Testis (tissue), 5 donors: ENCODE measurements at regions of chr9 and their contacts with region 1.

Region 1: DNA sequence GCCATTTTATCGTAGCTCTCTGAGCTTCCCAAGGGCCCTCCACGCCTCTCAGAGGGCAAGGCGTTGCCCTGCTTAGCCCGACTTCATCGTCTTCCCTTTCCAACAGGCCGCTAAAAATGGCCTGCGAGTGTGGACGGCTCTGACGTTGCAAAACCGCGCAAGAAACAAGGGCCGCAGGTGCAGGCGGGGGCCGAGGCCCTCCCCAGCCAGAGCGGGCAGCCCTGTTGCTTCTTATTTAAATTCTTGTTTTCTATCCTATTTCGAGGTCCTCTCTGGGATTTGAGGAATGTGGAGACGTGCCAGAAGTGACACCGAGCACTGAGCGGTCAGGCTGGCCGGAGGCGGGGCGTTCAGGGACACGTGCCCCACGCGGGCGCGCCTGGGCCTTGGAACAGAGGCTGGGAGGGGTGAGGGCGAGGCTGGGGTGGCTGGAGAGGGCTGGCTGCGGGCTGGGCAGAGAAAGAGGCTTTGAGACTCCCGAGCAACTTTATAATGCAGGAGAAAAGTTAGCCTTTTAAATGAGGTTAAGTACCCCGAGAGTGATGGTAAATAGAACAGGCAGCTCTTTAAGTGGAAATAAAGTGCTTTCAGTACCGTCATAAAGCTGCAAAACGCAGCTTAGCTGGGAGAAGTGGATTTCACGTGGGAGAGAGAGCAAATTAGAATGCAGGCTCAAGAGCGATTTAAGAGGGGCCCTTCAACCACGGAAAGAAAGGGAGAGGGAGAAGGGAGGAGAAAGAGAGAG is 243.6 kb downstream of the AUH start:
- DNase-seq: peak; percentile 89
- H3K4me3 ChIP-seq: peak overlapping the region; percentile 19 to 40
- H3K27ac ChIP-seq: peak overlapping the region; percentile 41 to 79
- H3K4me1 ChIP-seq: peaks cover 13% of the 10 kb centered on the region
- H3K27me3 ChIP-seq: no peaks in the 10 kb centered on the region
- CTCF ChIP-seq: no peak
- POLR2A ChIP-seq: no peak

Region 2: GRCh38 chr9:91071185-91071990 is 46.7 kb before region 1 on chr9:
- intact Hi-C with region 1: no loop called
- DNase-seq: no peak
- H3K4me3 ChIP-seq: no peak overlapping the region
- H3K27ac ChIP-seq: no peak overlapping the region
- H3K4me1 ChIP-seq: peaks cover 19% of the 10 kb centered on the region
- H3K27me3 ChIP-seq: no peaks in the 10 kb centered on the region
- CTCF ChIP-seq: no peak
- POLR2A ChIP-seq: no peak

Region 3: GRCh38 chr9:91193658-91194391 is 75.7 kb after region 1 on chr9:
- intact Hi-C with region 1: loop called (anchors 5 kb)
- DNase-seq: peak; percentile 81
- H3K4me3 ChIP-seq: peak overlapping the region; percentile 47 to 58
- H3K27ac ChIP-seq: peak overlapping the region; percentile 92 to 97
- H3K4me1 ChIP-seq: peaks cover 25% of the 10 kb centered on the region
- H3K27me3 ChIP-seq: no peaks in the 10 kb centered on the region
- CTCF ChIP-seq: no peak
- POLR2A ChIP-seq: no peak

Region 4: DNA sequence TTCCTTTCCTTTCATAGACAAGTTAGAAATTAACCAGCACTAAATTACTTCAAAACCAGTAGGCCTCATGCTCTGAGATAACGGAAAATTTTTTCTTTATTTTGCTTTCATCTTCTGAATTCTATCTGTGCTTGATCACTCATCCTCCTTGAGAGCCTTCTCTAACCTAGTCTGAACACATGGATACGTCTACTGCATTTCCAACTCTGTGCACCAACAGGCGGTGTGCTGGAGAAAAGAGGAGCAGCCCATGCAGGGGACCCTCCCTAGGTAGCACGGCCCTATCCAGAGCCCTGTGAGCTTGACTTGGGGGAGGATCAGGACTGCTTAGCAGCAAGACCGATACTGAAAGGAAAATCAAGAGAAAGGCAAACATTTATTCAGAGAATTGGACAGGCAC is 93.8 kb after region 1 on chr9:
- intact Hi-C with region 1: no loop called
- DNase-seq: no peak
- H3K4me3 ChIP-seq: no peak overlapping the region
- H3K27ac ChIP-seq: no peak overlapping the region
- H3K4me1 ChIP-seq: peaks cover 10% of the 10 kb centered on the region
- H3K27me3 ChIP-seq: no peaks in the 10 kb centered on the region
- CTCF ChIP-seq: no peak
- POLR2A ChIP-seq: no peak